ENCODE measurements at regions of chr15 and their contacts with region 1.

Region 1: DNA sequence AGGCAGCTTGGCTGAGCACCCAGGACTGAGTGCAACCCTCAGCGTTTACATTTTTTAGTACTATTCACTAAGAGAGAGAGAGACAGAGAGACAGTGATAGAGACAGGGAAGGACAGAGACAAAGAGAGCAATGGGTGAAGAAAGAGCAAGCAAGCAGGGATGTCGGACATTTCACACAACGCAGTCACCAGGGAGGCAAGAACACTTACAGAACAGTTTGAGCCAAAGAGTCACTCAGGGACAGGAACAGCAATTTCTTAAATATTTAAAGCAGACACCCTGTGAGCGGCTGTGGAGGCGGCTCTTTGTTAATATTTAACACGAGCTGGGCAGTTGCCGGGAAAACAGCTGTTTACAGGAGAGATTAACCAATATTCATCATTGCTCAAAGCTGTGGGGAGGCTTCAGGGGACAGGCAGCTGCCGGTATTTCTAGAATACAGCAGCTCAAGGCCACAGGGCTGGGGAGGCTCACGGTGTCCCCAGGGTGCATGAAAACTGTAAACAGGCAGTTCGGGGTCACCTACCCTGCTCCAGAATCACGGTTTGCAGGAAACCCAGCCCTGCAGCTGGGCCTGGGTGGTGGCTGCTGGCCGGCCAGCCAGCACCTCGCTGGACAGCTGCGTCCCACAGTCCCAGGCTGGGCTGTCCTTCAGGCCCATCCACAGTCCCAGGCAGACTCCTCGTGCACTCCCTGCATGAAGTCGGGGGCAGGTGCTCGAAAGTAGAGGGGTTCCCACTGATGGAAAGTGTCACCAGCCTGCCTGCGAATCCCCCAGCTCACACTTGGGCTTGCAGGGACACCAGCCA is 38.8 kb upstream of the PCSK6 start:
- DNase-seq: peak in 4 of 5 donors; percentile 53 to 79 (median 63)
- ATAC-seq: peak; percentile 74 to 91 (median 84)
- H3K4me3 ChIP-seq: no peak overlapping the region
- H3K27ac ChIP-seq: peak overlapping the region in 9 of 12 donors; percentile 17 to 83 (median 42)
- H3K4me1 ChIP-seq: peaks cover 0 to 25% (median 14%) of the 10 kb centered on the region in 12 donors
- H3K27me3 ChIP-seq: no peaks in the 10 kb centered on the region
- CTCF ChIP-seq: no peak
- POLR2A ChIP-seq: no peak

Region 2: GRCh38 chr15:101469520-101470288 is 58.6 kb before region 1 on chr15:
- intact Hi-C with region 1: loop called in 1 of 10 experiments (anchors 5 kb)
- DNase-seq: peak in 2 of 5 donors; percentile 58 to 59
- ATAC-seq: peak; percentile 75 to 85 (median 84)
- H3K4me3 ChIP-seq: peak overlapping the region in 4 of 12 donors; percentile 1 to 35 (median 10)
- H3K27ac ChIP-seq: peak overlapping the region in 11 of 12 donors; percentile 27 to 84 (median 75)
- H3K4me1 ChIP-seq: peaks cover 0 to 25% (median 8%) of the 10 kb centered on the region in 12 donors
- H3K27me3 ChIP-seq: peaks cover 0 to 4% (median 0%) of the 10 kb centered on the region in 9 donors
- CTCF ChIP-seq: no peak
- POLR2A ChIP-seq: peak in 1 of 2 donors; percentile 10

Region 3: DNA sequence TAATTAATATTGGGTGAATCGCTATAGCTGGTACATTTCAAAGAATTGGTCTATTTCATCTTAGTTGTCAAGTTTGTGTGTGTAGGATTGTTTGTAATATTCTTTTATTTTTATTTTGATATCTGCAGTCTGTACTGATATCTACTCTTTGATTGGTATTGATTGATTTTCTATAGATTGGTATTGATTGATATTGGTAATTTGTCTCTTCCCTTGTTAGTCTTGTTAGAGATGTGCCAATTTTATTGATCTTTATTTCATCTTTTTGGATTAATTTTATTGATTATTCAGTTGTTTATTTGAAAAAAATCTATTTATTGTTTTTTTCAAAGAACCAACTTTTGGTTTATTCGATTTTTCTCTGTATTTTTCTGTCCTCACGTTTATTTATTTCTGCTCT is 62.5 kb after region 1 on chr15:
- intact Hi-C with region 1: no loop called
- DNase-seq: no peak
- ATAC-seq: no peak
- H3K4me3 ChIP-seq: no peak overlapping the region
- H3K27ac ChIP-seq: no peak overlapping the region
- H3K4me1 ChIP-seq: no peaks in the 10 kb centered on the region
- H3K27me3 ChIP-seq: no peaks in the 10 kb centered on the region
- CTCF ChIP-seq: no peak
- POLR2A ChIP-seq: no peak

Region 4: GRCh38 chr15:101615986-101616848 is 87.9 kb after region 1 on chr15:
- intact Hi-C with region 1: loop called in 1 of 10 experiments (anchors 5 kb)
- DNase-seq: peak; percentile 60 to 87 (median 81)
- ATAC-seq: peak; percentile 45 to 69 (median 60)
- H3K4me3 ChIP-seq: peak overlapping the region in 5 of 12 donors; percentile 3 to 22 (median 13)
- H3K27ac ChIP-seq: peak overlapping the region in 8 of 12 donors; percentile 4 to 77 (median 36)
- H3K4me1 ChIP-seq: peaks cover 0 to 81% (median 41%) of the 10 kb centered on the region in 12 donors
- H3K27me3 ChIP-seq: no peaks in the 10 kb centered on the region
- CTCF ChIP-seq: no peak
- POLR2A ChIP-seq: no peak

Measured in heart left ventricle (tissue), 16 donors.